ENCODE measurements at regions of chr13 and their contacts with region 1.

Region 1: GRCh38 chr13:32669030-32669646 is 82.9 kb downstream of the PDS5B start:
- DNase-seq: no peak
- H3K4me3 Mint-ChIP-seq: no peak overlapping the region
- H3K27ac Mint-ChIP-seq: no peak overlapping the region
- H3K4me1 Mint-ChIP-seq: peaks cover 8% of the 10 kb centered on the region
- H3K27me3 Mint-ChIP-seq: no peaks in the 10 kb centered on the region

Region 2: GRCh38 chr13:32911506-32911905 is 242.4 kb after region 1 on chr13:
- CTCF ChIA-PET with region 1: interaction called, 12 read pairs
- DNase-seq: peak; percentile 58
- H3K4me3 Mint-ChIP-seq: no peak overlapping the region
- H3K27ac Mint-ChIP-seq: no peak overlapping the region
- H3K4me1 Mint-ChIP-seq: peaks cover 12% of the 10 kb centered on the region
- H3K27me3 Mint-ChIP-seq: no peaks in the 10 kb centered on the region

Region 3: GRCh38 chr13:33665626-33666175 is 996.6 kb after region 1 on chr13:
- CTCF ChIA-PET with region 1: no interaction called
- DNase-seq: no peak
- H3K4me3 Mint-ChIP-seq: no peak overlapping the region
- H3K27ac Mint-ChIP-seq: no peak overlapping the region
- H3K4me1 Mint-ChIP-seq: no peaks in the 10 kb centered on the region
- H3K27me3 Mint-ChIP-seq: no peaks in the 10 kb centered on the region